ENCODE measurements at regions of chr6 and their contacts with region 1.

Region 1: GRCh38 chr6:39342692-39343395 is 20.3 kb upstream of the KCNK16 start:
- DNase-seq: peak in 2 of 3 donors; percentile 35 to 48
- H3K4me3 ChIP-seq: no peak overlapping the region
- H3K27ac ChIP-seq: no peak overlapping the region
- H3K4me1 ChIP-seq: peaks cover 32 to 66% (median 60%) of the 10 kb centered on the region in 4 experiments
- H3K27me3 ChIP-seq: no peaks in the 10 kb centered on the region

Region 2: DNA sequence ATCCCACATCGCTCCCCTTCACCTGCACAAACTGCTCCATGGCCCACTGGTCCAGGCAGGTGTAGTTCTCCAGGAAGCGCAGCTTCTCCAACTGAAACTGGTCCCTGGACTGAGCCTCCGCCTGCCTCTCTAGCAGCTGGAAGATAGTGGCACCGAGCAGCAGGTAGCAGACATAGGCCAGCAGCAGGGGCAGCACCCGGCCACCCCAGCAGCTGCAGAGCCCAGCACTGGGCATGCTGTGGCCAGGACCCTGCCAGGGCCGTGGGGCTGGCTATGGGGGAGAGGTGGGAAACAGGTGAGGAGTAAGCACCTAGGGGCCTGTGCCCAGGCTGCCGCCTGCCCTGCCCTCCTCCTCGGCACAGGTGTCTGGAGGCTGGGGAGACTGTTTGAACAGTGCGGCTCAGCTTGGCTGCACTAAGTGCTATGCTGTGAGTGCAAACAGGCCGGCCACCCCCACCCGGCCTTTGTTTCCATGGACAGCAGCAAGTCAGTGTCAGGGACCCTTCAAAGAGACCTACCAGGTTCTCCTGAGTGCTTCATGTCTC is 20.5 kb before region 1 on chr6 and contains the start of gene KCNK16:
- CTCF ChIA-PET with region 1: interaction called, 31 read pairs
- POLR2A ChIA-PET with region 1: interaction called, 3 read pairs
- DNase-seq: no peak
- H3K4me3 ChIP-seq: no peak within 1 kb of the TSS
- H3K27ac ChIP-seq: no peak within 1 kb of the TSS
- H3K4me1 ChIP-seq: peaks cover 4 to 56% (median 47%) of the 10 kb centered on the region in 4 experiments
- H3K27me3 ChIP-seq: no peaks in the 10 kb centered on the region

Region 3: DNA sequence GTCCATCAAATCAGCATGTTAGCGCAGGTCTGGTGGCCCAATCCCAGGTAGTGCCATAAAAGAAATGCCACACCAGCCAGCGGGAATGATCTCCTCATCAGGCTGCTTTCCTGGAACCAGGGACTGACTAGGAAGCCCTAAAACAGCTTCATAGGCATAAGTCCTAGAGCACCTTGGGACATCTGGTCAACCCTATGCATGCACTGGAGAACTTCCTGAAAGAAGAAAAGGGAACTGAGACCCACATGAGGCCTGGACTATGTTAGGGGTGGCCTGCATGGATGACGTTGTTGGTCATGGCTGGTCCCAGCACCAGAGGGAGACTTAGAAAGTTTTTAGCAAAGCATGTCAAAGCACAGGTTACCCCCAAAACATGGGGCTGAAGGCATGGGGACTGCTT is 12.8 kb before region 1 on chr6:
- CTCF ChIA-PET with region 1: interaction called, 31 read pairs
- POLR2A ChIA-PET with region 1: no interaction called
- DNase-seq: peak; percentile 40 to 80 (median 79)
- H3K4me3 ChIP-seq: no peak overlapping the region
- H3K27ac ChIP-seq: no peak overlapping the region
- H3K4me1 ChIP-seq: peaks cover 0 to 47% (median 28%) of the 10 kb centered on the region in 4 experiments
- H3K27me3 ChIP-seq: no peaks in the 10 kb centered on the region